ENCODE measurements at regions of chr16 and their contacts with region 1.

Region 1: GRCh38 chr16:66947302-66948065 is 12.2 kb downstream of the CES2 start:
- DNase-seq: peak in 1 of 2 donors; percentile 93
- H3K4me3 ChIP-seq: peak overlapping the region; percentile 56 to 64
- H3K27ac ChIP-seq: no peak overlapping the region
- H3K4me1 ChIP-seq: peaks cover 0 to 12% of the 10 kb centered on the region in 2 donors
- H3K27me3 ChIP-seq: no peaks in the 10 kb centered on the region
- CTCF ChIP-seq: peak; percentile 78 to 84 (median 82)

Region 2: DNA sequence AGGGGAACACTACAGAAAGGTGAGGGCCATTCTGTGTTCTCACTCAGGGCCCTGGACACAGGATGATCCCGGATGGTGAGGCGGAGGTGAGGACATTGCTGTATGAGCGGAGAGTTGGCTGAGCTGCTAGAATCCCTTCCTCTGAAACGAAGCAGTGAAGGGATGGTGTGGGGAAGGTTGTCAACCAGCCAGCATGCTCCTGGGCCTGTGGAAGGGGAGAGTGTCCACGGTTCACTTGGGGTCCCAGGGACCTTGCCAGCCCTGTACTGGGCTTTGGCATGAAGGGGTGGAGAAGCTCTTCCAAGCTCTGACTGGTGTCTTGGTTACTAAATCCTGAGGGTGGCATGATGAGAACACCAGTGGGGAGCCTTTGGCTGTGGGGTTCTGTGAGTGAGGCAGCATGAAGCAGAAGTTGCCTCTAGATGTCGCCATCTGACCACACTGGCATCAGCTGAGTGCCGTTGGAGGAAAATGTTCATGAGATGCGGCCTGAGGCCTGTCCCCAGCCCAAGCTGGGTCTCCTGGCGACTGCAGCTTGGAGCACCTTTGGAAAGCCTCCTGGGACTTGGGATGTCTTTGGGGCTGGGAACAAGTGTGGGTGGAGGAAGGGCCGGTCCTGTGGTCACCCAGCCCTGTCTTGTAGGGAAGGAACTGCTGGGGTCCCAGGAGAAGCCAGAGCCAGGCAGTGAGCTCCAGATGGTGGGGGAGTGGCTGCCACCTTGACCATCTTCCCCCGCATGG is 52.4 kb before region 1 on chr16:
- intact Hi-C with region 1: loop called (anchors 2 kb)
- DNase-seq: peak in 1 of 2 donors; percentile 85
- H3K4me3 ChIP-seq: no peak overlapping the region
- H3K27ac ChIP-seq: peak overlapping the region; percentile 40 to 54
- H3K4me1 ChIP-seq: peaks cover 16 to 39% of the 10 kb centered on the region in 2 donors
- H3K27me3 ChIP-seq: no peaks in the 10 kb centered on the region
- CTCF ChIP-seq: peak; percentile 86 to 93 (median 88)

Region 3: GRCh38 chr16:67104061-67104460 is 156.6 kb after region 1 on chr16:
- intact Hi-C with region 1: no loop called
- DNase-seq: no peak
- H3K4me3 ChIP-seq: no peak overlapping the region
- H3K27ac ChIP-seq: no peak overlapping the region
- H3K4me1 ChIP-seq: peaks cover 0 to under 1% of the 10 kb centered on the region in 2 donors
- H3K27me3 ChIP-seq: no peaks in the 10 kb centered on the region
- CTCF ChIP-seq: no peak

Measured in ascending aorta (tissue), 2 donors.